ENCODE measurements at regions of chr18 and their contacts with region 1.

Region 1: DNA sequence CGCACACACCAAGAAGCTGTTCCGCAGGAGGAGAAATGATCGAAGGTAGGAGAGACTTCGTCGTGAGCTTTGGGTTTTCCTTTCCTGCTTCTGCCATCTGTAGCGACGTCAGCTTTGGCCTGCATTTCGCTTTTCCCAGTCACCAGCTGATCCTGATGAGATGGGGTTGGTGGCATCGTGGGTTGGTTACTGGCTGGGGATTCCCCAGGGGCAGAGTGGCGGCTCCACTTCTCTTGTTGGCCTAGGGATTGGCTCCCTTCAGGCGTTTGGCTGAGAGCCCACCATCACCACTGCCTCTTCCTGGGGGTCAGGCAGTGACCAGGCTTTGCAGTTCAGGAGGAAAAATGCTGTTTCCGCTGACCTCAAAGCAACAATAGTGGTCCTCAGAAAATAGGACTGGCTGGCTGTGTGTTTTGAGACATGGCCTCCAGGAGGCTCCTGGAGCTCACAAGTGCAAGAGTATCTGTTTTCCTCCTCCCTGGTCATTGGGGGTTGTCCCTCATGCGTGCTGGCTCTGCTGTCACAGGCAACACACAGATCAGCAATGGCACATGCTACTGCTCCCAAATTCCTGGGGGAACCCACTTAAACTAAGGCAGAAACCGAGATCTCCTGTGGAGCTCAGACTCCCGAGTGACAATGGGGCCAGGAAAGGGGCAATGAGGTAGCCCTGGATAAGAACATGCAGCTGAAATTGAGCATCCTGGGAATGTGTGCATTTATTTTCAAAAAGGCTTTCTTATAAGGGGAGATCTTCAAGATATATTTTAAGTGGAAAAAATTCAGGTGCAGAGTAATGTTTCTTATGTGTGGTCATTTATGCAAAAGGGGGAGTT is 173.0 kb downstream of the CTIF start:
- DNase-seq: no peak
- H3K4me3 ChIP-seq: no peak overlapping the region
- H3K27ac ChIP-seq: no peak overlapping the region
- H3K4me1 ChIP-seq: peaks cover 0 to 1% of the 10 kb centered on the region in 2 donors
- H3K27me3 ChIP-seq: no peaks in the 10 kb centered on the region
- CTCF ChIP-seq: peak; percentile 22 to 63 (median 48)

Region 2: DNA sequence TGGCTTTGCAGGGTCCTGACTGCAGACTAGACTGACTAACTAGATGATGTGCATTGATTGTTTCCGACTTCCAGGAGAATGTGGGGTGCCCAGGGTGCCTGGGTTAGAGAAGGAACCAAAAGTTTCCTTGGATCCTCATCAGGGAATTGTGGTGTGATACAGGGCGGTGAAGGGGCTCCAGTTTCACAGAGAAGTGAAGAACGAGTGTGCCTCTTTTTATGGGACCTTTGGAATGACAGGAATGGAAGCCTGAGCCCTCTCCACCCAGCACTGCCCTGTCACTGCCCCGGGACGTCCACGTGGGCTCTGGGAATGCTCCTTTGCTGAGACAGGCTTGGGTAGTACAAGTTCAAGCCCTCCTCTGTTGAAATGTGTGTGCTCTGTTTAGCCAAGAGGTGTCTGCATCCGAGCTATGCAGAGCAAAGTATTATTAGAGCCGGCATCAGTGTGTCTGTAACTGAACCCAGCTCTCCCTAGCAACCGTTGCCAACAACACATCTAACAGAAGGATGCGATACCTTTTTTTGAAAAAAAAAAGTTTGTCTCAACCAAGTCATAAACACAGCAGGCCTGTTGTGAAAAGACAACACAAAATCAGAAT is 55.3 kb after region 1 on chr18:
- intact Hi-C with region 1: loop called (anchors 5 kb)
- DNase-seq: no peak
- H3K4me3 ChIP-seq: no peak overlapping the region
- H3K27ac ChIP-seq: peak overlapping the region in 1 of 2 donors; percentile 45
- H3K4me1 ChIP-seq: peaks cover 0 to 4% of the 10 kb centered on the region in 2 donors
- H3K27me3 ChIP-seq: no peaks in the 10 kb centered on the region
- CTCF ChIP-seq: no peak